ENCODE measurements at regions of chr7 and their contacts with region 1.

Region 1: DNA sequence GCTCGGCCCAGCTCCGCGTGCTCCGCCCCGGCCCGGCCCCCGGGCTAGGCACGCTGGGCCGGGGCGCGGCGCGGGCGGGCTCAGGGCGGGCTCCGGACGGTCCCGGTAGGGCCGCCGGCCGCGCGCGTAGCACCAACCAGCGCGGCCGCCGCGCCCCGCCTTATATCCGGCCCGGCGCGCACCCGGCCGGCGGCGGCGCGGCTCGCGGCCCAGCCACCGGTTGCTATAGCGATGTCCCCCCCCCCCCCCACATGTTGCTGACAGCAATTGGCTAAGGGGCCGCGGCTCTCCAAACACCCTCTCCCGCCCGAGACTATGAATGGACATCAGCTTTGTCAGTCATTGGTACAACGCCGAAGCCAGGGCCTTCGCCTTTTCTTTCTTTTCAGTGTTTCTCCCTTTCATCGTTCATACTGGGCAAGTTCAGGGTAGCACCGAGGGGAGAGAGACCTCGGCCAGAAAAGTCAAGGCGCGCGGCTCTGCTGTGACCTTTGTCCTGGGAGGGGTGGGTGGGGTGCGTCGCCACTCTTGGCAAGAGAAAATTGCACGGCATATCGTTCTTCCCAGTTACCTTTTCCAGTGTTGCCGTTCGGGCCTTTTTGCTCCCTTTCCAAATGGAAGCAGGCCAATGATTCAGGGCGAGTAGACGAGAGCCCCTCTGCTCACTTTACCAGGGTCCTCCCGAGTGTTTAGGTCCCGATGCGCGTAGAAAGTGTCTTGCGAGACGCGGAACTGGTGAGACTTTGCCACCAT is 354.2 kb downstream of the DNAJB6 start:
- DNase-seq: peak; percentile 81
- ATAC-seq: peak; percentile 92

Region 2: DNA sequence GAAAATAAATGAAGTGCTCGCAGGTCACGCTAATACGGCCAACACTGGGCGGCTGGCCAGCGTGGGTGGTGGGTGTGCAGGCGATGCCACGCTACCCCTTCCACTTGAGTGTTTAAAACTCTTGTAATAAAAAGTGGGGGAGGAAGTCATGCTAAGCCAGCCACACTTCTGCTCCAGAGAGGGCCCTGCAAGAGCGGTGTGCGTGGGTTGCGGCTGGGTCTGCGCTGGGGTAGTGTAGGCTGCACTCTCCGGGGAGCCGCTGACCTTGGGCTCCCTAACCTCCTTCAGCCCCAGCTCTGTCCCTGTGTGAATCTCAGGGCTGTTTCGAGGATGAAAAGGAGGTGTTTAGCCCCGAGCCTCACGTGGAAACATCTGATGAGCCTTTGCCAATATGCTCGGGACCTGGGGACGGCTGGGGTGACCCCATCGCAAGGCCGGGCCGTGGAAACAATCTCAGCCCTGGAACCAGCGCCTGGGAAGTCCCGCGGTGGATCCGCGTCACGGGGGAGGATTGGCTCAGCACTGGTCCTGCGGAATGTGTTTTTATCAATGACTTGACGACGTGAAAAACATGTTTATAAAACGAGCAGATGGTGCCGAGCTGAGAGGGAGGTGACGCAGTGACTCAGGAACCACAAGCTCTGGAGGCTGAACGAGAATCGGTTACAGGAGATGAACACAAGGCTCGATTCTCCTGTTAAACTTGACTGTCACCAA is 75.8 kb before region 1 on chr7:
- intact Hi-C with region 1: loop called (anchors 5 kb)
- DNase-seq: no peak
- ATAC-seq: peak; percentile 77

Region 3: GRCh38 chr7:157745721-157746709 is 55.0 kb after region 1 on chr7:
- intact Hi-C with region 1: no loop called
- DNase-seq: no peak
- ATAC-seq: no peak

Region 4: DNA sequence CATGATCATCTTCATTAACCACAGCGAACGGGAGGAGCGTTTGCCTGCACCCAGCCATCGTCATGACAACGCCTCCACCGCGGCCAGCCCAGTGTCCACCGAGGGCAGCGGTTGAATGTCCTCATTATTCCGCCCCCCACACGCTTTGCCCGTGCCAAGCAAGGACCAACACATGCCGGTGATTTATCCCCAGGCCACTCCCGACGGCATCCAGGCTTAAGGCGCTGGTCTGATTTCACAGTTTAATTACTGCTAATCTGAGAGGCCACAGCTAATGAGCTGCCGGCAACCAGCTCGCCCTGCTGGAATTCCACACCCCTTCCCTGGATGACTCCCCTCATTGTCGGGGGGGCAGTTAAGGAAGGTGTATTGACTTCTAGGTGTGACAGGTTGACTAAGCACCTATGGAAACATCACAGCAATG is 78.1 kb after region 1 on chr7:
- intact Hi-C with region 1: no loop called
- DNase-seq: no peak
- ATAC-seq: no peak

Measured in Right ventricle myocardium inferior (tissue), 1 donor.